ENCODE measurements at regions of chr12 and their contacts with region 1.

Region 1: DNA sequence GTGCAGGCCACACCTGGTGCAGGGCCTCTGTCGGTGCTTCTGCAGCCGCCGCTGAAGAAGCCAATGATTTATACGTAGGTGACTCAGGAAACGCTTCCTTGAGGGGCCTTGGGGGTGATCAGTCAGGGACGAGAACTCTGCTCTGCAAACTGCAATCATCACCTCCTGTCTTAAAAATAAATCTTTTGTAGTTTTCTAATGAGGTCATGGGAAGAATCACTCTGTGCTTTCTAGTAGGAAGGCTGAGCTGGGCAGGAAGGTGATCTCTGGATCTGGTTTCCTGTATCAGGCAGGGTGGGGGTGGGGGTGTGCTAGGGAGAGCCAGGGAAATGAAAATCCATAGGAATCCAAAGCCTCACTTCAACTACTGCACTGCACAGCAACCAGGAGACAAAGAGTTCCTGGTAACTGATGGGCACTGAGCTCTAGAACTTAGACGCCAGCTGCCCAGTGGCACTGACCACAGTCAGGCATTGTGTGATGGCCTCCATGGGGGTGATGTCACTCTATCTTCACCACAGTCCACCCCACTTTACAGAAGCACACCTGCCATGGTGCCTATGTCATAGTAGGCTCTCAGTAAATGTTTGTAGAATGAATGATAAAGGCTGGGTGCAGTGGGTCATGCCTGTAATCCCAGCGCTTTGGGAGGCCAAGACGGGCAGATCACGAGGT is 292.4 kb upstream of the PWP1 start:
- DNase-seq: peak in 5 of 14 experiments; percentile 11 to 45 (median 21)
- ATAC-seq: peak; percentile 76
- H3K4me3 ChIP-seq: no peak overlapping the region
- H3K4me3 Mint-ChIP-seq: peak overlapping the region; percentile 32
- H3K27ac ChIP-seq: no peak overlapping the region
- H3K27ac Mint-ChIP-seq: peak overlapping the region; percentile 81
- H3K4me1 ChIP-seq: peaks cover 54% of the 10 kb centered on the region
- H3K4me1 Mint-ChIP-seq: peaks cover 83% of the 10 kb centered on the region
- H3K27me3 ChIP-seq: no peaks in the 10 kb centered on the region
- H3K27me3 Mint-ChIP-seq: no peaks in the 10 kb centered on the region
- CTCF ChIP-seq: no peak

Region 2: DNA sequence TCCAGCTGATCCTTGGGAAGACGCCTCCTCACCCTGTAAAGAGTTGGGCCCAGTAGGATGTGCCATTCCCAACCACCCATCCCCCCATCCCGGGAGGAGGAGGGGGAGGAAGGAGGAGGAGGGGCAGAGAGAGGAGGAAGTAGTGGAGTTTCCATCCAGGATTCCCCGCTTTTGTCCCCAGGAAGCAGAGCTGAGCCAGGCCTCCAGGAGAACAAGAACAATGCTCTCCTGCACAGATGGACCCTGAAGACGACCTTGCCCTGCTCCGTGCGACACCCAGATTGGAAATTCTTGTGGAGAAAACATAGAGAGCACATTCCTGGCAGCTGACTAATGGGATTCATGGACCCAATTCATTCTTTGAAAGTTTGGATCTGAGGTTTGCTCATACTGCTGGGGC is 167.5 kb before region 1 on chr12:
- CTCF ChIA-PET with region 1: no interaction called
- POLR2A ChIA-PET with region 1: no interaction called
- intact Hi-C with region 1: loop called in 1 of 2 experiments (anchors 10 kb)
- DNase-seq: no peak
- ATAC-seq: no peak
- H3K4me3 ChIP-seq: no peak overlapping the region
- H3K4me3 Mint-ChIP-seq: no peak overlapping the region
- H3K27ac ChIP-seq: no peak overlapping the region
- H3K27ac Mint-ChIP-seq: no peak overlapping the region
- H3K4me1 ChIP-seq: no peaks in the 10 kb centered on the region
- H3K4me1 Mint-ChIP-seq: no peaks in the 10 kb centered on the region
- H3K27me3 ChIP-seq: peaks cover 0 to 4% of the 10 kb centered on the region in 2 experiments
- H3K27me3 Mint-ChIP-seq: peaks cover 16% of the 10 kb centered on the region
- CTCF ChIP-seq: no peak

Measured in CD4-positive, alpha-beta T cell (primary cell).